IMR-90 (cell line): ENCODE measurements at regions of chr7 and their contacts with region 1.

Region 1: DNA sequence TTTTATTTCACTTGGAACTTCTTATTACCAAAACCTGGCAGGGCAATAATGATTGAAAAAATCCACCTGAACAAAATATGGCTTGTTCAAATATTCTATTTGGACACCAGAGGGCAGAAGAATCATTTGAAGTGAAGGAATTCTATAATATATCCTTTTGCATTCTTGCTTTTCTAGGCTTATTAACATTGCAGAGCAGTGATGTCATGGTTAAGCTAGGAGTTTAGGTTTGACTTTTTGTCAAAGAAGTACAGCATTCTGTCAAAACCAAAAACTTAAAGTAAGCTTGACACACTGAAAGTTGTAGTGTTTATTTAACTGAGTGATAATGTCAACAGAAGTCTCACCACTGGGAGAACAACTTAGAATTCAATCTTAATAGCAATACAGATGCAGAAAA is 156.0 kb downstream of the SEMA3D start:
- DNase-seq: peak; percentile 79
- ATAC-seq: peak; percentile 89
- H3K4me3 ChIP-seq: no peak overlapping the region
- H3K27ac ChIP-seq: no peak overlapping the region
- H3K4me1 ChIP-seq: no peaks in the 10 kb centered on the region
- H3K27me3 ChIP-seq: no peaks in the 10 kb centered on the region; the same call in 1 of the 2 replicates
- CTCF ChIP-seq: peak; percentile 66
- POLR2A ChIP-seq: no peak
- RAD21 ChIP-seq: peak; percentile 67

Region 2: GRCh38 chr7:84524714-84525694 is 505.9 kb before region 1 on chr7:
- CTCF ChIA-PET with region 1: no interaction called
- POLR2A ChIA-PET with region 1: no interaction called
- dilution Hi-C with region 1: no loop called
- in situ Hi-C with region 1: no loop called
- intact Hi-C with region 1: no loop called
- DNase-seq: peak; percentile 88
- ATAC-seq: peak; percentile 46
- H3K4me3 ChIP-seq: no peak overlapping the region
- H3K27ac ChIP-seq: peak overlapping the region; percentile 90
- H3K4me1 ChIP-seq: peaks cover 4% of the 10 kb centered on the region
- H3K27me3 ChIP-seq: no peaks in the 10 kb centered on the region
- CTCF ChIP-seq: no peak
- POLR2A ChIP-seq: no peak
- RAD21 ChIP-seq: no peak

Region 3: DNA sequence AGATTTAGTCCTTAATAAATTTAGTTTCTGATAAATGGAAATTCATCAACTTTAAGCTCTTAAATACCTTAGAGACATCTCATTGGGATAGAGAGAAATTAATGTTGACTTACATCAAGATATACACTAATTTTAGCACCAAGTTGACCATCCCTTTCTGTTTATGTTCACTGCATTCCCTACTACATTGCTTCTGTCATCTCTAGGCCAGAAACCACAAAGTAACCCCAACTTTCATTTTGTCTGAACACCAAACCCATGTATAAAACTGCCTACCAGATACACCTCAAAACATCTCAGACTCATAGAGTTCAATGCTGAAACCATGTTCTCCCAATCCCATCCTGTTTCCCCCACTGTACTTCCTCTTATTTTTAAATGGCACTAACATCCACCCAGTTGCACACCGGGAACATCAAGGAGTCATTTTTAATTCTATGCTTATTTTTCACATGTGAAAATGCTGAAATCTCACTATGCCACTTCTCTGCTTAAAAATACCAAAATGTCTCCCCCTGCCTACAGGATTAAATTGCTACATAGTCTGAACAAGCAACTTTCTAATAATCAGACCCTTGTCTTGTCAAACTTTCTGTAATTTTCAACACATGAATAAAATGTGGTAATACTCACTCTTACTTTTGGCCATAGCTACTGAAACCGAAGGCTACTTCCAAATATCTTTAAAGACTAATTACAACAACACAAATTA is 45.7 kb before region 1 on chr7:
- CTCF ChIA-PET with region 1: no interaction called
- POLR2A ChIA-PET with region 1: no interaction called
- dilution Hi-C with region 1: no loop called
- in situ Hi-C with region 1: no loop called
- intact Hi-C with region 1: no loop called
- DNase-seq: peak; percentile 15
- ATAC-seq: peak; percentile 29; the same call in 1 of the 2 replicates
- H3K4me3 ChIP-seq: no peak overlapping the region
- H3K27ac ChIP-seq: no peak overlapping the region
- H3K4me1 ChIP-seq: peaks cover 3% of the 10 kb centered on the region; the same call in 1 of the 2 replicates
- H3K27me3 ChIP-seq: no peaks in the 10 kb centered on the region
- CTCF ChIP-seq: no peak; the same call in 1 of the 2 replicates
- POLR2A ChIP-seq: no peak
- RAD21 ChIP-seq: no peak

Region 4: DNA sequence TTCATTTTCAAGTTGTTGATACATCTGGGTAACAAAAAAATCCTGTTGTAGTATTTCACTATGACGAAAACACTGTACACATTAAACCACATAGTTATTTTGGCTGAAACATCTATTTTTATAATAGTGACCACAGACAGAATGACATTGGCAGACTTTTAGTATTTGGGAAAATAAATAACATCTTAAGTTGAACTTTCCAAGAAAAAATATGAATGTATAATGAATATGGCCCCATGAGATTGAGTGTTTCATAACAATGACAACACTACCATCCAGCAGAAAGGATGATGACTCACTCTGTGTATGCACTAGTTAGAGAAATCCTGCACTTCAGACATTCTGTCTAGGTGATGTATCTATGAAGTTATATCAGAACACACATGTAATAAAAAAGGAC is 37.9 kb after region 1 on chr7:
- CTCF ChIA-PET with region 1: no interaction called
- POLR2A ChIA-PET with region 1: no interaction called
- dilution Hi-C with region 1: no loop called
- in situ Hi-C with region 1: no loop called
- intact Hi-C with region 1: no loop called
- DNase-seq: peak; percentile 83
- ATAC-seq: peak; percentile 67
- H3K4me3 ChIP-seq: no peak overlapping the region
- H3K27ac ChIP-seq: no peak overlapping the region
- H3K4me1 ChIP-seq: peaks cover 10% of the 10 kb centered on the region
- H3K27me3 ChIP-seq: no peaks in the 10 kb centered on the region
- CTCF ChIP-seq: no peak
- POLR2A ChIP-seq: no peak
- RAD21 ChIP-seq: no peak

Region 5: DNA sequence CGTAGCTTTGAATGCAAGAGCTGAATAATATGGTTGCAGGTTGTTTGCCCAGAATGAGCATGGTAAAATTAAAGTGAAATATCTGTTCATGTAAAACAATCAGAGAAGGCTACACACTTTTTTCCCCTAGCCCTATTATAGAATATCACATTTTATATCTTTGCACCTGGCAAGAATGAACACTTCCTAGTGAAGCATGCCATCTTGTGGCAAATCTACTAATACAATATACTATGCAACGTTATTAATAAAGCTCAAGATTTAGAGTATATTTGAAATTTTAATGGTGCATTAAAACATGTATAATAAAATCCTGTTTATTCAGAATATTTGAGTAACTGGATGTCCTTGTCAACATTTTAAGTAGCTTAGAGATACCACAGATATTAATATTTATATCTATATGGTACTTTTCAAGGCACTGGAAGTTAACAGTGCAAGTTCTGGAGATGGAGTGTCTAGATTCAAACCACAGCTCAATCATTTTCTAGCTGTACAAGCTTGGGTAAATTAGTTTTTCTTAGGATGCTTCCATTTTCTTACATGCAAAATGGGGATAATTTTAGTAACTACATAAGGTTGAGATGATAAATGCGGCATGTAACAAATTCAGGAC is 799.0 kb after region 1 on chr7:
- CTCF ChIA-PET with region 1: interaction called, 5 read pairs
- POLR2A ChIA-PET with region 1: no interaction called
- dilution Hi-C with region 1: no loop called
- in situ Hi-C with region 1: no loop called
- intact Hi-C with region 1: loop called (anchors 2 kb)
- DNase-seq: peak; percentile 11
- ATAC-seq: 0 out of 2 replicates have a peak, but pooled peaks have one; percentile 57
- H3K4me3 ChIP-seq: no peak overlapping the region
- H3K27ac ChIP-seq: no peak overlapping the region
- H3K4me1 ChIP-seq: no peaks in the 10 kb centered on the region
- H3K27me3 ChIP-seq: no peaks in the 10 kb centered on the region
- CTCF ChIP-seq: peak; percentile 52
- POLR2A ChIP-seq: no peak
- RAD21 ChIP-seq: peak; percentile 62

Region 6: DNA sequence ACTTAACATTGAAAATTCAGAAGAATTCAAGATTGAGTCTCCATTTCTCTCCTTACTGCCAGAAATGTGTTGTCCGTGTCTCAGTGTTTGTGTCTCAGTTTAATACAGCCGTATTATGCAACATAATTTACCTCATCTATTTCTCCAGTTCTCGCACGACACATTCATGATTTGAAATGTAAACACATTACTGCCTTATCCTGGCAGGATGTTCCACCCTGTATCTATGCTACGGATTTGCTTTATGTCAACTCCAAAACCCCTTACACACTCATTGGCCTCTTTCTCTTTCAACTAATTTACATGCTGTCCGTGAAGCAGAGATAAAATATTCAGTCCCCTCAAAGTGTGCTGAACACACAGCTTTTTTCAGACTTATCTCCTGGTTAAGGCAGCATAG is 809.7 kb after region 1 on chr7:
- CTCF ChIA-PET with region 1: no interaction called
- POLR2A ChIA-PET with region 1: no interaction called
- dilution Hi-C with region 1: no loop called
- in situ Hi-C with region 1: loop called (anchors 10 kb)
- intact Hi-C with region 1: no loop called
- DNase-seq: peak; percentile 13
- ATAC-seq: peak; percentile 51
- H3K4me3 ChIP-seq: no peak overlapping the region
- H3K27ac ChIP-seq: no peak overlapping the region
- H3K4me1 ChIP-seq: no peaks in the 10 kb centered on the region
- H3K27me3 ChIP-seq: no peaks in the 10 kb centered on the region
- CTCF ChIP-seq: no peak
- POLR2A ChIP-seq: no peak
- RAD21 ChIP-seq: no peak

Region 7: GRCh38 chr7:85851571-85852193 is 820.8 kb after region 1 on chr7:
- CTCF ChIA-PET with region 1: interaction called, 5 read pairs
- POLR2A ChIA-PET with region 1: no interaction called
- dilution Hi-C with region 1: no loop called
- in situ Hi-C with region 1: loop called (anchors 10 kb)
- intact Hi-C with region 1: loop called (anchors 1 kb)
- DNase-seq: peak; percentile 69
- ATAC-seq: 0 out of 2 replicates have a peak, but pooled peaks have one; percentile 35
- H3K4me3 ChIP-seq: no peak overlapping the region
- H3K27ac ChIP-seq: no peak overlapping the region
- H3K4me1 ChIP-seq: no peaks in the 10 kb centered on the region
- H3K27me3 ChIP-seq: no peaks in the 10 kb centered on the region
- CTCF ChIP-seq: peak; percentile 57
- POLR2A ChIP-seq: no peak
- RAD21 ChIP-seq: peak; percentile 61